Activated T-helper 1 cell treated with anti-CD3 and anti-CD28 coated beads, Interleukin-12 subunit alpha, Interleukin-12 subunit beta, Interleukin-2, Interleukin-4 antibody, amounts not matched to agents 30 ng/mL and 10 ng/mL and 1 ng/mL, durations not matched to agents 14 hours and 24 hours and 36 hours (primary cell): ENCODE measurements at regions of chr1 and their contacts with region 1.

Region 1: DNA sequence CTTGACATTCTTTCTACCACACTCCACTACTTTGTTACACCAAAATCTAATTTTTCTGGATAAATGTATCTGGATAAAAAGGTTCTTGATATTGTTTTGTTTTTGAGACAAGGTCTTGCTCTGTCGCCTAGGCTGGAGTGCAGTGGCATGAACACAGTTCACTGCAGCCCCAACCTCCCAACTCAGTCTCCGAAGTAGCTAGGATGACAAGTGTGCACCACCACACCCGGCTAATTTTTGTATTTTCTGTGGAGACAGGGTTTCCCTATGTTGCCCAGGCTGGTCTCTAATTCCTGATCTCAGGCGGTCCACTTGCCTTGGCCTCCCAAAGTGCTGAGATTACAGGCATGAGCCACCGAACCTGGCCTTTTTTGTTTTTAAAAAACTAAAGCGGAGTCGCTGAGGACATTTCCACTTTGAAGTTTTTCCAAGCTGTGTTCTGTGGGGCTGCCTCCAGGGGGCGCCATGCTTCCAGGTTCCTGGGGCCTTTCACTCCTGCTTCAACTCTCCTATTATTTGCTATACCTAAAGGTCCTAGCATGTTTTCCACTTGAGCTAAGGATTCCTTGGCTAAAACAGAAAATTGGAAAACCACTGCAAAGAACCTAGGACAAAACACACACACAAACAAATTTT is 14.1 kb upstream of the NCMAP start:
- DNase-seq: no peak
- H3K4me3 Mint-ChIP-seq: no peak overlapping the region
- H3K27ac Mint-ChIP-seq: no peak overlapping the region
- H3K4me1 Mint-ChIP-seq: peaks cover 37% of the 10 kb centered on the region
- H3K27me3 Mint-ChIP-seq: peaks cover 7% of the 10 kb centered on the region

Region 2: GRCh38 chr1:24235921-24236781 is 305.7 kb before region 1 on chr1:
- intact Hi-C with region 1: no loop called
- DNase-seq: no peak
- H3K4me3 Mint-ChIP-seq: no peak overlapping the region
- H3K27ac Mint-ChIP-seq: no peak overlapping the region
- H3K4me1 Mint-ChIP-seq: peaks cover 4% of the 10 kb centered on the region
- H3K27me3 Mint-ChIP-seq: peaks cover 6% of the 10 kb centered on the region

Region 3: DNA sequence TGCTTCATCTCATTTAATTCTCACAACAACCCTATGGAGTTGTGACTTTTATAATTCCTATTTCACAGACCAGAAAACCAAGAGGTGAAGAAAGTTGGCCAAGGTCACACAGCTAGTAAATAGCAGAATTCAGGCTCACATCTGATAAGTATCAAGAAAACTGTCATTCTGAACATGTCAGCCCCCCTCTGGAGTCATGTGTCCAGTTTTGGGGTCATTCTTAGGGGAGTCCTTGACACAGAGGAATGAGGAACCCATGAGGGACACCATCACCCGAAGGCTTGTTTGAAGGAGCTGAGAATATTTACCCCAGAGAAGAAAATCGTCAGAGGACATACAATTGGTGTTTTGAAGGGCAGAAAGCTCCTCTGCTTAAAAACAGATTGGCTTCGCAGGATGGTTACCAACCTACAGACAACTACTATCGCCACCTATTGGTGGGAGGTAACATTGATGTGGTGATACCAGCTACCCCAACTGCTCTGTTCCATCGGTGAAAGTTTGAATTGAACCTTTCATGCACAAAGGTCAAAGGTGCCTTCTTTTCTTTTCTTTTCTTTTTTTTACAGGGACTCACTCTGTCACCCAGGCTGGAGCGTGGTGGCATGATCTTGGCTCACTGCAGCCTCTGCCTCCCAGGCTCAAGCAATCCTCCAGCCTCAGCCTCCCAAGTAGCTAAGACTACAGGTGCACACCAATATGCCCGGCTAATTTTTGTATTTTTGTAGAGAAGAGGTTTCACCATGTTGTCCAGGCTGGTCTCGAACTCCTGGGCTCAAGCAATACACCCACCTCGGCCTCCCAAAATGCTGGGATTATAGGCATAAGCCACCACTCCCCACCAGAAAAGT is 45.4 kb after region 1 on chr1:
- intact Hi-C with region 1: loop called (anchors 1 kb)
- DNase-seq: peak; percentile 53
- H3K4me3 Mint-ChIP-seq: no peak overlapping the region
- H3K27ac Mint-ChIP-seq: no peak overlapping the region
- H3K4me1 Mint-ChIP-seq: peaks cover 9% of the 10 kb centered on the region
- H3K27me3 Mint-ChIP-seq: peaks cover 17% of the 10 kb centered on the region

Region 4: DNA sequence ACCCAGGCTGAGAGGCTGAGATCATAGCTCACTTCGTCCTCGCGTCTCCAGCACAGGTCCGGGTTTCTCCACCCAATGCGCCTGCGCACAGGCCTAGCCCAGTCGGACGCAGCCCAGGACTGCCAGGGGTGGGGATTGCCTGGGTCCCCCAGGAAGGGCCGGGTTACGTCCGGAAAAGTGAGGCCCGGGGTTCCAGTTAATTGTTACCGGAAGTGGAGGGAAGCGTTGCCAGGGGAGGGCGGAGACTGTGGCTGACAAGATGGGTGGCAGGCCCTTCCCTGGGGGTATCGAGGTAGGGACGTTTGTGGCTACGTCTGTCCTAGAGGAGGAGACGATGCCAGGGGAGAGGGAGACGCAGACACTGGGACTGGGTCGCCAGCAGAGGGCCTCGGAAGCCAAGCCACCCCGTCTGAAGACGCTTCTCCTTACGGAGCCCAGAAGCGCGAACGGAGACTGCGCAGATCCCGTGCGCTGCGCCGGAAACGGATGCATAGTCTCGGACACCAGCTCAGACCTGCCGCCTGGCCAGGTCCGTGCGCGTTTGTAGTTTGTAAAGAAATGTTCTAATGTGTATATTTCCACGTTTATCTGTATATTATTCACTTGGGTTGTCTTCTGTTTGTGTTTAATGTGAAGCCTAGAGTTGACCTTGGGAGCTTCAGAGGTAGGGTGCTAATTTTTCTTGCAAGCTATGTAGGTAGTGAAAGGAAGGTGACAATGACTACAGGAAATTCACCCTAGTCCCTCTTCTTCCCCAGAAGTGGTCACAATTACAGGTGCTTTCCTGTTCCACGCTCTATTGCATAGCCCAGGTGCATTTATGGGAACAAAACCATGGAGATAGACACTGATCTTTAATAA is 698.1 kb after region 1 on chr1:
- intact Hi-C with region 1: no loop called
- DNase-seq: peak; percentile 88
- H3K4me3 Mint-ChIP-seq: peak overlapping the region; percentile 83
- H3K27ac Mint-ChIP-seq: peak overlapping the region; percentile 91
- H3K4me1 Mint-ChIP-seq: peaks cover 63% of the 10 kb centered on the region
- H3K27me3 Mint-ChIP-seq: no peaks in the 10 kb centered on the region